PC-3 (cell line): ENCODE measurements at regions of chr13 and their contacts with region 1.

Region 1: GRCh38 chr13:88919970-88920628 is 1248.9 kb downstream of the SLITRK5 start:
- DNase-seq: no peak
- ATAC-seq: no peak
- H3K4me3 ChIP-seq: no peak overlapping the region
- H3K27ac ChIP-seq: no peak overlapping the region
- H3K4me1 ChIP-seq: no peaks in the 10 kb centered on the region
- H3K27me3 ChIP-seq: no peaks in the 10 kb centered on the region
- CTCF ChIP-seq: no peak

Region 2: DNA sequence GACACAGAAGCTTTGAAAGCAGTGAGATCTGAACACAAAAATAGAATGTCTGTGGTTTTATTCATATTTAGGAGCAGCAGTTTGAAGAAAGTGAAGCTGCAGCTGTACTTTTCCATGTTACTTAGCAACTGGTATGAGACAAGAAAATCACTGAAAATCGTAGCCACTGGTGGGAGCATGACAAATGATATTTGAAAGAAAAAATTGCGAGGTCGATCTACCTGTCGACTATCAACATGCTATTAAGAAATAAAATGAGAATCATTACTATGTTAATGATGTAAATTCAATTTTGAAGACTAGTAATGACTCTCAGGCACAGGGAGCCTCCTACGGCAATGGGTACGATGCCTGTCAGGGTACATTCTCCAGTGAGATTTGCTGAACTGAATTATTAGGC is 812.5 kb before region 1 on chr13:
- CTCF ChIA-PET with region 1: no interaction called
- POLR2A ChIA-PET with region 1: interaction called, 20 read pairs
- intact Hi-C with region 1: no loop called
- DNase-seq: no peak
- ATAC-seq: no peak
- H3K4me3 ChIP-seq: no peak overlapping the region
- H3K27ac ChIP-seq: no peak overlapping the region
- H3K4me1 ChIP-seq: no peaks in the 10 kb centered on the region
- H3K27me3 ChIP-seq: no peaks in the 10 kb centered on the region
- CTCF ChIP-seq: no peak

Region 3: DNA sequence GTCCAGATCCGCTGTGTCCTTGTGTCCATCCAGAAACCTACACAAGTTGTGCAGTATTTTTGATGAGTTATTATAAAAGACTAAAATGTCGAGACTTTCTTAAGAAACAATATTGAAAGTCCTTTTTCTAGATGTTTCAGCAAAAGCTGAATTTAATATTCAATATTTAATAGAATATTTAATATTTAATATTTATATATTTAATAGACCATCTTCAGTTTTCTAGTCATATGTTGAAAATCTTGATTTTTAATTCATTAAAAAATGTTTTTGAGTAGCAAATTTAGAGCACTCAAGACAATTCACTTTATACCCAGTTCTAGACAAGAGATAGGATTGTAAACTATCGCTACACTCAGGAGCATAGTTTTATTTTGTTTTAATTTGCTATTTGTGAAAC is 801.1 kb before region 1 on chr13:
- CTCF ChIA-PET with region 1: no interaction called
- POLR2A ChIA-PET with region 1: no interaction called
- intact Hi-C with region 1: no loop called
- DNase-seq: no peak
- ATAC-seq: no peak
- H3K4me3 ChIP-seq: no peak overlapping the region
- H3K27ac ChIP-seq: no peak overlapping the region
- H3K4me1 ChIP-seq: no peaks in the 10 kb centered on the region
- H3K27me3 ChIP-seq: no peaks in the 10 kb centered on the region
- CTCF ChIP-seq: no peak

Region 4: GRCh38 chr13:88840085-88840484 is 80.0 kb before region 1 on chr13:
- CTCF ChIA-PET with region 1: no interaction called
- POLR2A ChIA-PET with region 1: no interaction called
- intact Hi-C with region 1: no loop called
- DNase-seq: no peak
- ATAC-seq: no peak
- H3K4me3 ChIP-seq: no peak overlapping the region
- H3K27ac ChIP-seq: no peak overlapping the region
- H3K4me1 ChIP-seq: no peaks in the 10 kb centered on the region
- H3K27me3 ChIP-seq: no peaks in the 10 kb centered on the region
- CTCF ChIP-seq: no peak